MCF 10A (cell line): ENCODE measurements at regions of chr11 and their contacts with region 1.

Region 1: GRCh38 chr11:92941676-92942571 is 27.5 kb upstream of the MTNR1B start:
- DNase-seq: peak; percentile 71
- H3K4me3 Mint-ChIP-seq: no peak overlapping the region
- H3K27ac Mint-ChIP-seq: no peak overlapping the region
- H3K4me1 Mint-ChIP-seq: no peaks in the 10 kb centered on the region
- H3K27me3 Mint-ChIP-seq: no peaks in the 10 kb centered on the region
- CTCF ChIP-seq: peak; percentile 78

Region 2: DNA sequence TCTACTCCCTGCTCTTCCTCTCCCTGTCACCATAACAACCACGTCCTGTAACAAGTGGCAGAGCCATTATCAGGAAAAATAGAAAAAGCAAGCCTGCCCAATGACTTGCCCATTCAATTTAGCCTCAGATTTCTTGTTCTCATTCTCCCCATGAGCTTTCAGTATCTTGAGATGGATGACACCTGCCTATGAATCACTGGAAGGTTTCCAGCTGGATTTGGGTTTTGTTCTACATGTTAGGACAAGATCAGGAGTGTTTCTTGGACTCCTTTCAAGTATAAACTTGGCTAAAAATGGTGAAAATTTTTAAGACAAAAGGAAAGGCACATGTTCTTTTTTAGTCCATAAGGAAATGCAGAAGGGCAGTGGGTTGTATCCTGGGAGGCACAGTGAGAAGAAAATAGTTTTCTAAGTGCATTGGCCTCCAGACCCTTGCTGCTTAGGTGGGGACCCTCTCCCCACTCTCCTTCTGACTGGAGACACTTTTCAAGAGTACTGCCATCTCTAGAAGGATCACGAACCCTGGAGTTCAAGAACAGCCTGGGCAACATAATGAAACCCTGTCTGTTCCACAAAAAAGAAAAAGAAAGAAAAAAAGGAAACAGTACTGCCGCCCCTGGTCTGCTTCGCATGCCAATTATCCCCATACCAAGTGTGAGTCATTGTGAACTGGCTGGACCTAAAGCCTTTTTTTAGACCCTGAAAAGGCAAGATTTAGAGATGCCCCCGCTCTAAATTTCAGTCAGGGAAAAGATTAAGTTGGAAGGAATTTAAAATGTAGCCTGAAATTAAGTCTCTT is 78.5 kb after region 1 on chr11:
- CTCF ChIA-PET with region 1: interaction called, 18 read pairs
- POLR2A ChIA-PET with region 1: no interaction called
- intact Hi-C with region 1: loop called (anchors 1 kb)
- DNase-seq: peak; percentile 99
- H3K4me3 Mint-ChIP-seq: peak overlapping the region; percentile 55
- H3K27ac Mint-ChIP-seq: peak overlapping the region; percentile 88
- H3K4me1 Mint-ChIP-seq: peaks cover 46% of the 10 kb centered on the region
- H3K27me3 Mint-ChIP-seq: no peaks in the 10 kb centered on the region
- CTCF ChIP-seq: no peak

Region 3: DNA sequence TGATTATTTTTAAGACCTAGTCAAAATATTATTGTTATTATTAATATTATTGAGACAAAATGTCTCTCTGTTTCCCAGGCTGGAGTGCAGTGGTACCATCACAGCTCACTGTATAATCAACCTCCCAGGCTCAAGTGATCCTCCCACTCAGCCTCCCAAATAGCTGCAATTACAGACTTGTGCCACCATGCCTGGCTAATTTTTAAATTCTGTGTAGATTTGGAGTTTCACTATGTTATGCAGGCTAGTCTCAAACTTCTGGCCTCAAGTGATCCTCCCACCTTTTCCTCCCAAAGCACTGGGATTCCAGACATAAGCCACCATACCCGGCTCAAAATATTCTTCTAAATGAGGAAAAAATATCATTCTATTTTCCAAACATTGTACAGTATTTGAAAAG is 218.9 kb after region 1 on chr11:
- CTCF ChIA-PET with region 1: interaction called, 23 read pairs
- POLR2A ChIA-PET with region 1: no interaction called
- intact Hi-C with region 1: no loop called
- DNase-seq: no peak
- H3K4me3 Mint-ChIP-seq: no peak overlapping the region
- H3K27ac Mint-ChIP-seq: no peak overlapping the region
- H3K4me1 Mint-ChIP-seq: no peaks in the 10 kb centered on the region
- H3K27me3 Mint-ChIP-seq: no peaks in the 10 kb centered on the region
- CTCF ChIP-seq: no peak

Region 4: GRCh38 chr11:93197380-93198214 is 255.7 kb after region 1 on chr11 and contains the start of gene SLC36A4:
- CTCF ChIA-PET with region 1: interaction called, 20 read pairs
- POLR2A ChIA-PET with region 1: no interaction called
- intact Hi-C with region 1: no loop called
- DNase-seq: peak; percentile 95
- H3K4me3 Mint-ChIP-seq: peak within 1 kb of the TSS; percentile 94
- H3K27ac Mint-ChIP-seq: peak within 1 kb of the TSS; percentile 97
- H3K4me1 Mint-ChIP-seq: peaks cover 22% of the 10 kb centered on the region
- H3K27me3 Mint-ChIP-seq: peaks cover 21% of the 10 kb centered on the region
- CTCF ChIP-seq: no peak
- total RNA-seq, gene SLC36A4: 23.4 and 30.1 TPM in 2 replicates

Region 5: GRCh38 chr11:93543292-93543977 is 601.5 kb after region 1 on chr11 and contains the start of gene SMCO4:
- CTCF ChIA-PET with region 1: interaction called, 7 read pairs
- POLR2A ChIA-PET with region 1: no interaction called
- intact Hi-C with region 1: loop called (anchors 10 kb)
- DNase-seq: peak; percentile 79
- H3K4me3 Mint-ChIP-seq: peak within 1 kb of the TSS; percentile 79
- H3K27ac Mint-ChIP-seq: peak within 1 kb of the TSS; percentile 57
- H3K4me1 Mint-ChIP-seq: peaks cover 8% of the 10 kb centered on the region
- H3K27me3 Mint-ChIP-seq: peaks cover 11% of the 10 kb centered on the region
- CTCF ChIP-seq: peak; percentile 78
- total RNA-seq, gene SMCO4: 8.5 and 10.0 TPM in 2 replicates